Activated CD8-positive, alpha-beta T cell treated with anti-CD3 and anti-CD28 coated beads, Interleukin-2, amount 10 ng/mL, durations not matched to agents 7 days and 5 days (primary cell): ENCODE measurements at regions of chr11 and their contacts with region 1.

Region 1: GRCh38 chr11:34051349-34052035 is at the start of gene CAPRIN1:
- DNase-seq: peak; percentile 89
- ATAC-seq: peak; percentile 83
- H3K4me3 Mint-ChIP-seq: peak within 1 kb of the TSS; percentile 100
- H3K27ac Mint-ChIP-seq: peak within 1 kb of the TSS; percentile 99
- H3K4me1 Mint-ChIP-seq: peaks cover 22% of the 10 kb centered on the region
- H3K27me3 Mint-ChIP-seq: peaks cover 3% of the 10 kb centered on the region
- total RNA-seq, gene CAPRIN1: 219 to 235 TPM

Region 2: DNA sequence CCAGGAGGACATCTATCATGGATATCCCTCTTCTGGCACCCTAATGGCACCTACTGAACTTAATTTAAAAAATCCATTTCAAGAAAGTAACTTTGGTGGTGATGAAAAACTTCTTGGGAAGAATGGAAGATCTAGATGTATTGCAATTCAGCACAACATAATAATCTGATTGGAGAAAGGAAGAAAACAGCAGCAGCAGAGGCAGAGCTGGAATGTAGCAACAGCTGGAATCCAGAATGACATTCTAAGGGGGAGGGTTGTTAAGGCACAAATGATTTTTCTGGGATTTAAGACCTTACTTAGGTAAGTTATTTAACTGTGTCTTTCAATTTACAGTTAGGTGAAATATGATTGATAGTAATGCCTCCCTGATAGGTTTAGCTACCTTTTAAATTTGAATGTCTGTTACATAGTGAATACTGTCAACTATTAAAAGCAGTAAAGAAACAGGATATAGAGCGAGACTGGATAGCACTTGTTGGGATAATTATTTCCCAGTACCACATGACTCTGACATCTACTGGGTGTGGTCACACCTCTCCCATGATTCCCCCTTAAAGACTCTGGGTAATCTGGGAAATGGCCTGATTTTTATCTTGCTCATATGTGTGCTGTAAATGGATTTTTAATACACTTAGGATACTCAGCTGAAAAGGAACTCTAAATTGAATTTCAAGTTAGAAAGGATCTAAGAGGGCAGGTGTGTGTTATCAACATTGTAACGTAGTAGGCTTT is 11.7 kb after region 1 on chr11:
- CTCF ChIA-PET with region 1: no interaction called
- POLR2A ChIA-PET with region 1: interaction called, 14 read pairs
- DNase-seq: no peak
- ATAC-seq: no peak
- H3K4me3 Mint-ChIP-seq: no peak overlapping the region
- H3K27ac Mint-ChIP-seq: peak overlapping the region; percentile 44
- H3K4me1 Mint-ChIP-seq: peaks cover 53% of the 10 kb centered on the region
- H3K27me3 Mint-ChIP-seq: no peaks in the 10 kb centered on the region

Region 3: DNA sequence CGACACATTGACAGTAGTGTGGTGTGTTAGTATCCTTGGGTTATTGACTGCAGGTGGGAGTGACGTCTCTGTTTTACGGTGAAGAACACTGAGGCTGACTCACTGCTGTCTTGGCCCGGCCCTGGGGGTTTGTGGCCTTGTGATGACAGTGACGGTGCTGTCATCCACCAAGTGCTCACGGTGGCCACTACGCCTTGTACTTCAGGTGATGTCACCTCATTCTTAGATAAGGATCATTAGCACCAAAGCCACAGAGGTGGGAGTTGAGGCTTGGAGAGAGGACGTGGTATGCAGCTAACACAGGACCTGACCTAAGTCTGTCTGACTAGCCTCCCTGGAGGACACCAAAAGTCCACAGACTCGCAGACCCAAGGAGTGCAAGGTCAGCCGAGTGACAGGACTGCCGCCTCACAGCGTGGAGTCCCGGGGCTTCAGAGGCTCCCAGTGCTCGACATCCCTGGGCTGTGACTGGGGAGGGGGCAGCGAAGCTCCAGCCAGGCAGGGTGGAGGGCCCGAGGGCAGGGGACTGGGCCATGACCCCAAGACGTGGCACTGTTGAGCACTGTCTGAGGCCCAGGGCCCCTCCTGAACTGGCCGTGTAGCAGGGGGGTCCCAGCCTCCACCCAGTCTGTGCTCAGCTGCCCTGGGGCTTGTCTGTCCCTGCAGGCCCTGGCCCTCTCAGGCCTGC is 110.5 kb after region 1 on chr11:
- CTCF ChIA-PET with region 1: no interaction called
- POLR2A ChIA-PET with region 1: no interaction called
- DNase-seq: peak; percentile 72
- ATAC-seq: peak; percentile 73
- H3K4me3 Mint-ChIP-seq: no peak overlapping the region
- H3K27ac Mint-ChIP-seq: no peak overlapping the region
- H3K4me1 Mint-ChIP-seq: peaks cover 38% of the 10 kb centered on the region
- H3K27me3 Mint-ChIP-seq: no peaks in the 10 kb centered on the region

Region 4: GRCh38 chr11:34234086-34234740 is 182.7 kb after region 1 on chr11:
- CTCF ChIA-PET with region 1: no interaction called
- POLR2A ChIA-PET with region 1: no interaction called
- DNase-seq: peak; percentile 80
- ATAC-seq: peak; percentile 95
- H3K4me3 Mint-ChIP-seq: no peak overlapping the region
- H3K27ac Mint-ChIP-seq: peak overlapping the region; percentile 72
- H3K4me1 Mint-ChIP-seq: peaks cover 29% of the 10 kb centered on the region
- H3K27me3 Mint-ChIP-seq: no peaks in the 10 kb centered on the region

Region 5: DNA sequence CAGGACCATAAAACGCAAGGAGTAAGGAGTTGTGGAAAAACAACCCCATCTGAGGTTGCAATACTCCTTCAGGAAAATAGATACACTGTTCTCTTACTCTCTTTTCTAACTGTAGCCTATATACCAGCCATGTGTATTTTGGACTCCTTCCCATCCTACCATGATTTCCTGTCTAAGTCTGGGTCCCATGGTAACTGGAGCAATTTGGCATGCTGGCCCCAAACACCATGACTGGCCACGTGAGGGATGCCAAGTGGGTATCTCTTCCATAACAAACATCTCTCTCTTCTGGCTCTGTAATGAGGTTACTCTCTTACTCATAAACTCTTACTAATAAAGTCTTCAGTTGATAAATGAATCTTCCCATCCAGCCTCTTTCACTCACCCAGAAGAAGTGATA is 279.8 kb after region 1 on chr11:
- CTCF ChIA-PET with region 1: no interaction called
- POLR2A ChIA-PET with region 1: no interaction called
- DNase-seq: no peak
- ATAC-seq: no peak
- H3K4me3 Mint-ChIP-seq: no peak overlapping the region
- H3K27ac Mint-ChIP-seq: no peak overlapping the region
- H3K4me1 Mint-ChIP-seq: peaks cover 6% of the 10 kb centered on the region
- H3K27me3 Mint-ChIP-seq: peaks cover 18% of the 10 kb centered on the region